ENCODE measurements at regions of chr1 and their contacts with region 1.

Region 1: GRCh38 chr1:15430787-15431570 is 7.3 kb upstream of the CTRC start:
- H3K4me3 Mint-ChIP-seq: no peak overlapping the region
- H3K27ac Mint-ChIP-seq: peak overlapping the region; percentile 74
- H3K4me1 Mint-ChIP-seq: peaks cover 88% of the 10 kb centered on the region
- H3K27me3 Mint-ChIP-seq: no peaks in the 10 kb centered on the region

Region 2: GRCh38 chr1:15323351-15323988 is 107.5 kb before region 1 on chr1:
- intact Hi-C with region 1: loop called (anchors 2 kb)
- H3K4me3 Mint-ChIP-seq: no peak overlapping the region
- H3K27ac Mint-ChIP-seq: peak overlapping the region; percentile 66
- H3K4me1 Mint-ChIP-seq: peaks cover 55% of the 10 kb centered on the region
- H3K27me3 Mint-ChIP-seq: peaks cover 6% of the 10 kb centered on the region

Measured in dendritic cell treated with granulocyte-macrophage colony-stimulating factor and Interleukin-4, amounts not matched to agents 40 ng/mL and 50 ng/mL, for 4 days (primary cell).